ENCODE measurements at regions of chr11 and their contacts with region 1.

Region 1: GRCh38 chr11:10653926-10654810 is 39.4 kb downstream of the IRAG1 start:
- DNase-seq: no peak
- H3K4me3 ChIP-seq: no peak overlapping the region
- CTCF ChIP-seq: no peak

Region 2: GRCh38 chr11:10514210-10514609 is 140.0 kb before region 1 on chr11:
- CTCF ChIA-PET with region 1: interaction called, 23 read pairs
- POLR2A ChIA-PET with region 1: no interaction called
- DNase-seq: no peak
- H3K4me3 ChIP-seq: no peak overlapping the region
- CTCF ChIP-seq: no peak

Region 3: GRCh38 chr11:10564696-10565318 is 89.4 kb before region 1 on chr11:
- CTCF ChIA-PET with region 1: interaction called, 11 read pairs
- POLR2A ChIA-PET with region 1: no interaction called
- DNase-seq: no peak
- H3K4me3 ChIP-seq: no peak overlapping the region
- CTCF ChIP-seq: peak; percentile 32

Region 4: GRCh38 chr11:10641177-10641911 is 12.8 kb before region 1 on chr11:
- CTCF ChIA-PET with region 1: interaction called, 34 read pairs
- POLR2A ChIA-PET with region 1: no interaction called
- DNase-seq: no peak
- H3K4me3 ChIP-seq: no peak overlapping the region
- CTCF ChIP-seq: no peak

Region 5: GRCh38 chr11:10735481-10736475 is 81.6 kb after region 1 on chr11:
- CTCF ChIA-PET with region 1: interaction called, 13 read pairs
- POLR2A ChIA-PET with region 1: interaction called, 3 read pairs
- DNase-seq: peak; percentile 87
- H3K4me3 ChIP-seq: peak overlapping the region; percentile 50
- CTCF ChIP-seq: peak; percentile 94

Region 6: DNA sequence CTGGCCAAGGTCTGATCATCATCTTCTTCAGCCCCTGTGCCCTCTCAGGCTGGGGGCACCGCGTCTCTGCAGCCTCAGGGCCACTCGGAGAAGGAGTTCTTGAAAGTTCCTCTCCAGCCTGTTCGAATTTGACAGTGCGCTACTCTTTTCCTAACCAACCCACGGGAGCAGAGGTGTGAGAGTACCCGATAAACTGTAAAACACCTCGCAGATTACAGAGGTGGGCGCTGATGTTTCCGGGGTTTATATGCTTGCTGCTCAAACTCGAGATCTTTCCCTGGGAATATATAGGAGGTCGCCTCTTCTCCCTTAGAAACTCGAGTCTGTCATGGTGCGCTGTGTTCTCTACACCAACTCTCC is 97.4 kb after region 1 on chr11:
- CTCF ChIA-PET with region 1: no interaction called
- POLR2A ChIA-PET with region 1: no interaction called
- DNase-seq: no peak
- H3K4me3 ChIP-seq: peak overlapping the region; percentile 68
- CTCF ChIP-seq: no peak

Measured in AG04449 (cell line).